GM10248 (cell line): ENCODE measurements at regions of chr11 and their contacts with region 1.

Region 1: GRCh38 chr11:128302425-128303186 is 284.8 kb downstream of the ETS1 start:
- DNase-seq: no peak
- CTCF ChIP-seq: no peak

Region 2: DNA sequence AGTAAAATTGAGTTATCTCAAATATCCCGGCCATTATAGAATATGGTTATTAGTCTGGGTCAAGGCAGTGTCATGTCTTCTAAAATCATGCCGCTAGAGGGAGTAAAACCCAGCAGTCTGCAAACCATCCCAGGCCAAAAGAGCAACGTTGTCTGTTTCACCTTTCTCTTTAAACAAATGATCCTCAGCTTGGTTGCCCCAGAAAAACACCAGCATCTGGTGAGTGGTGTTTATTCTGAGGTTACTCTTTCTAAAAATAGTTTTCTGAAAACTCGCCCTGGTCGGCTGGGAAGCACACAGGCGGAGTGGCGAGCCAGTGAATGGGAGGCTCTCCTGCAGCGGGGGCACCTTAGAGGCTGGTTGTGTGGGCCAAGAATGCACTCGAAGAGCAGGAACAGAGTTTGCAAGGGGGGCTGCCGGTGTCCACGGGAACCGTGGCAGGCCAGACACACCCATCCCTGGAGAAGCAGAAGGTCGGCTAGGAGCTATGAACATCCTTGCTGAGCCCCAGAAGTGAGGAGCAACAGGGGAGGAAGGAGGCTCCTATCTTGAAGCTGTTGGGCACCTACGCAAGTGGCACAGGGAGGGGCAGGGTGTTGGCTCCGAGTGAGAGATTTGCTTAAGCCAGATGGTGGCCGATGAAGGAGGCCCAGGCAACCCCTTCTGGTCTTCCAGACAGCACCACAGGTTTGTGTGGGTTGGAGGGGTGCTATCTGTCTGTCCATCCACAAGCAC is 12.3 kb before region 1 on chr11:
- CTCF ChIA-PET with region 1: interaction called, 28 read pairs
- POLR2A ChIA-PET with region 1: interaction called, 6 read pairs
- DNase-seq: peak; percentile 77
- CTCF ChIP-seq: peak; percentile 67

Region 3: GRCh38 chr11:128318856-128319474 is 16.4 kb after region 1 on chr11:
- CTCF ChIA-PET with region 1: interaction called, 13 read pairs
- POLR2A ChIA-PET with region 1: no interaction called
- DNase-seq: peak; percentile 56
- CTCF ChIP-seq: no peak

Region 4: DNA sequence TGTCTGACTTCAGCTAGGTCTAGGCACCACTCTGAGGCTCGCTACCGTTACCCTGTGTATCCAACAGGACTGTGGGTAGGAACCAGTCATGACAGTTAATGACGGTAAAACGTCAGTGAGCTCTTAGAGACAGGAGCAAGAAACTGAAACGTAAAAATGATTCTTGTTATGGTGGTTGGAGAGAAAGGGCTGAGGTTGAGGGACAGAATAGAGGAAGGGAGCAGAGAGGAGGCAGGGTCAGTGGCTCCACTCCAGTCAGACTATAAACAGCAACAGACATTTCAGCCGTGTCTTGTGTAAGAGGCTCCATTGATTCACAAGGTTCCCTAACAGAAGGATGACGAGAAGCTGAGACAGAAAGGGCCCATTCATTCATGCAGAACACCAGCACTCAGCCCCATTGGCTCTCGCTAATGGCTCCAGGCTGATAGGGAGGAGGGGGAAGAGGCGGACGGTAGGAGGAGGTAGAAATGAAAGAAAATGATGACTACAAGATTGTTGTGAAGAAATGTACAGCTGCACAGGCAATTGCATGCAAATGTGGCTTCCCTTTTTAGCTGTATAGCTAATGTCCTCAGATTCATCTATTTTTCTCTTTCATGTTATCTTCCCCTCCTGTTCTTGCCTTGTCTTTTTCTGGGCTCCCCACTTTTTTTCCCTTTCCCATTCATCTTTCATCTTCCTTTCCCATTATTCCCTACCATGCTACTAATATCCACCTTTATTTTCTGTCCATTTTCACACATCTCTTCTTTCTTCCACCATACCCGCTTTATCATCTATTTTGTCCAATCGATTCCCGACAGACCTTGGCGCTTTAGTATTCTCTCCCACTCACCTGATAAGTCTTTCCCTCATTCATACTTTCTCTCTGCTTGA is 250.4 kb after region 1 on chr11:
- CTCF ChIA-PET with region 1: interaction called, 10 read pairs
- POLR2A ChIA-PET with region 1: no interaction called
- DNase-seq: peak; percentile 80
- CTCF ChIP-seq: no peak